Esophagus squamous epithelium (tissue), 5 donors: ENCODE measurements at regions of chr19 and their contacts with region 1.

Region 1: GRCh38 chr19:13794757-13795589 is at the start of gene ZSWIM4:
- DNase-seq: peak; percentile 95
- H3K4me3 ChIP-seq: peak within 1 kb of the TSS; percentile 79 to 91 (median 88)
- H3K27ac ChIP-seq: peak within 1 kb of the TSS; percentile 95 to 100 (median 99)
- H3K4me1 ChIP-seq: peaks cover 18 to 49% (median 25%) of the 10 kb centered on the region in 3 donors
- H3K27me3 ChIP-seq: no peaks in the 10 kb centered on the region
- CTCF ChIP-seq: peak in 1 of 6 experiments; percentile 19
- POLR2A ChIP-seq: peak in 3 of 4 donors; percentile 32 to 69 (median 55)
- total RNA-seq, gene ZSWIM4: 7.2 to 41.4 (median 16.9) TPM

Region 2: GRCh38 chr19:13689085-13689484 is 105.9 kb before region 1 on chr19:
- intact Hi-C with region 1: no loop called
- DNase-seq: no peak
- H3K4me3 ChIP-seq: no peak overlapping the region
- H3K27ac ChIP-seq: no peak overlapping the region
- H3K4me1 ChIP-seq: peaks cover 0 to 13% (median 3%) of the 10 kb centered on the region in 3 donors
- H3K27me3 ChIP-seq: peaks cover 0 to 7% (median 0%) of the 10 kb centered on the region in 4 donors
- CTCF ChIP-seq: no peak
- POLR2A ChIP-seq: no peak

Region 3: GRCh38 chr19:13839130-13839937 is 44.4 kb after region 1 on chr19:
- intact Hi-C with region 1: loop called (anchors 5 kb)
- DNase-seq: no peak
- H3K4me3 ChIP-seq: peak overlapping the region; percentile 74 to 99 (median 89)
- H3K27ac ChIP-seq: peak overlapping the region; percentile 98 to 100 (median 100)
- H3K4me1 ChIP-seq: peaks cover 66 to 90% (median 67%) of the 10 kb centered on the region in 3 donors
- H3K27me3 ChIP-seq: no peaks in the 10 kb centered on the region
- CTCF ChIP-seq: peak in 2 of 6 experiments; percentile 2 to 22
- POLR2A ChIP-seq: peak in 2 of 4 donors; percentile 59 to 77

Region 4: DNA sequence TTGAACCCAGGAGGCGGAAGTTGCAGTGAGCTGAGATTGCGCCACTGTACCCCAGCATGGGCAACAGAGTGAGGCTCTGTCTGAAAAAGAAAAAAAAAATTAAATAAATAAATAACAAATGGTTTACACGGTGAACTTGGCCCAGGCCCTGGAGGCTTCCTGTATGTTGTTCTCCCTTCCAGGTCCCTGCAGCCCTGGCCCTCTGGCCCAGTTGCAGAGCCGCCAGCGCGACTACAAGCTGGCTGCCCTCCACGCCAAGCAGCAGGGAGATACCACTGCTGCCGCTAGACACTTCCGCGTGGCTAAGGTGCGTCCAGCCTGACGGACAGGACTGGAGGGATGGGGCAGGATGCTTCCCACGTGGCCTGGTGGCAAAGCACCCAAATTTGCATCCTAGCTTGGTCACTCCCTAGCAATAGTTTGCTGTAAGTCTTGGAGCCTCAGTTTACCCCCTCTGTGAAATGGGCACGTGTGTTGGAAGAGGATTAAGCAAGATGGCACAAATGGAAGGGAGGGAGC is 123.0 kb after region 1 on chr19:
- intact Hi-C with region 1: no loop called
- DNase-seq: no peak
- H3K4me3 ChIP-seq: no peak overlapping the region
- H3K27ac ChIP-seq: no peak overlapping the region
- H3K4me1 ChIP-seq: no peaks in the 10 kb centered on the region
- H3K27me3 ChIP-seq: no peaks in the 10 kb centered on the region
- CTCF ChIP-seq: no peak
- POLR2A ChIP-seq: no peak